Heart left ventricle (tissue), 16 donors: ENCODE measurements at regions of chr22 and their contacts with region 1.

Region 1: GRCh38 chr22:28129319-28129962 is 210.4 kb upstream of the PITPNB start:
- DNase-seq: no peak
- ATAC-seq: no peak
- H3K4me3 ChIP-seq: no peak overlapping the region
- H3K27ac ChIP-seq: no peak overlapping the region
- H3K4me1 ChIP-seq: no peaks in the 10 kb centered on the region
- H3K27me3 ChIP-seq: no peaks in the 10 kb centered on the region
- CTCF ChIP-seq: no peak
- POLR2A ChIP-seq: no peak

Region 2: GRCh38 chr22:28094771-28095170 is 34.7 kb before region 1 on chr22:
- intact Hi-C with region 1: no loop called
- DNase-seq: no peak
- ATAC-seq: no peak
- H3K4me3 ChIP-seq: no peak overlapping the region
- H3K27ac ChIP-seq: no peak overlapping the region
- H3K4me1 ChIP-seq: no peaks in the 10 kb centered on the region
- H3K27me3 ChIP-seq: no peaks in the 10 kb centered on the region
- CTCF ChIP-seq: no peak
- POLR2A ChIP-seq: no peak

Region 3: DNA sequence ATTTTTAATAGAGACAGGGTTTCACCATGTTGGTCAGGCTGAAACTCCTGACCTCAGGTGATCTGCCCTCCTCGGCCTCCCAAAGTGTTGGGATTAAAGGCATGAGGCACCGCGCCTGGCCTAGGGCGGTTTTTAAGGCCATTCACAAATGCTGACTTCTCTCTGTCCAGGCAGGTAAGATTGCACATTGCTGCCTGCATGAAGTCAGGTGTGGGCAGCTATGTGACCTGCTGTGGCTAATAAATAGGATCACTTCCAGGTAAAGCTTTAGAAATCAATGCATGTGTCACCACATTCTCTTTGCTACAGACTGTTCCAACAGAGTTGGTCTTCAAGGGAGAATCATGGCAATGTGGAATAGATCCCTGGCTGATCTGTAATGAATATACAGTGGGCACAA is 49.9 kb after region 1 on chr22:
- intact Hi-C with region 1: loop called in 1 of 10 experiments (anchors 5 kb)
- DNase-seq: no peak
- ATAC-seq: no peak
- H3K4me3 ChIP-seq: no peak overlapping the region
- H3K27ac ChIP-seq: no peak overlapping the region
- H3K4me1 ChIP-seq: peaks cover 0 to 38% (median 17%) of the 10 kb centered on the region in 12 donors
- H3K27me3 ChIP-seq: no peaks in the 10 kb centered on the region
- CTCF ChIP-seq: no peak
- POLR2A ChIP-seq: no peak